AG04450 (cell line): ENCODE measurements at regions of chr14 and their contacts with region 1.

Region 1: DNA sequence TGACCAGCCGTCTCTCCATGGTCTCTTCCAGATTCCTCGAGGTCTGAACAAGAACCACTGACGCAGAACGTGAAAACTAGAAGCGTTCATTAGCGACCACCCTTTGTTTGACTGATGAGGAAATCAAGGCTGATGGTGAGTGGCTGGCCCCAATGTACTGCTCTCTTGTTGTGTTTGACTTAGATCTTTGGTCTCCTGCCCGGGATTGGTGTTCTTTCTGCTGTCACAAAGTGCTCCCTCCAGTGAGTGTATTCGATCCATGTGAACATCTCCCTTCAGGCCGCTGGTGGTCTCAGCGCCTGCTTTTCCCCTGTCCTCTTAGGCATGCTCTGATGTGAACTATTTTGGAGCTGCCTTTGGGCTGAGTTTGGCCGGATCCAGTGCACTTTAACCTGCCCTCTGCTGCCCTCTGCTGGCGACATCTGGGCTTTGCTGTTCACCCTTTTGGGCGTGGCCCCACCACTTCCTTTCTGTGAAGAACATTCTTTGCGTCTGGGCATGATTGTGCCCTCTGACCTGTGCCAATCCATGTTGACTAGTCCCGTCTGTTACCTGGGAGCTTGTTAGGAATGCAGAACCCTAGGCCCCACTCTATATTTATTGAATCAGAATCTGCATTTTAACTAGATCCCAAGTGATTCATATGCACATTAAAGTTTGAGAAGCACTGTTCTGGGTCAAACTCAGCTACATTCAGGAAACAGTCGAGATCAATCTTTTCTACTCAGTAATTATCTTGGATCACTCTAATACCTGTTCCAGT is 279.2 kb downstream of the TTC6 start:
- DNase-seq: peak; percentile 20
- H3K4me3 ChIP-seq: no peak overlapping the region
- H3K27ac ChIP-seq: no peak overlapping the region
- H3K27me3 ChIP-seq: no peaks in the 10 kb centered on the region
- CTCF ChIP-seq: peak; percentile 93

Region 2: GRCh38 chr14:37246427-37246914 is 628.1 kb before region 1 on chr14:
- CTCF ChIA-PET with region 1: interaction called, 43 read pairs
- POLR2A ChIA-PET with region 1: no interaction called
- DNase-seq: peak; percentile 27
- H3K4me3 ChIP-seq: no peak overlapping the region
- H3K27ac ChIP-seq: no peak overlapping the region
- H3K27me3 ChIP-seq: no peaks in the 10 kb centered on the region
- CTCF ChIP-seq: peak; percentile 72

Region 3: DNA sequence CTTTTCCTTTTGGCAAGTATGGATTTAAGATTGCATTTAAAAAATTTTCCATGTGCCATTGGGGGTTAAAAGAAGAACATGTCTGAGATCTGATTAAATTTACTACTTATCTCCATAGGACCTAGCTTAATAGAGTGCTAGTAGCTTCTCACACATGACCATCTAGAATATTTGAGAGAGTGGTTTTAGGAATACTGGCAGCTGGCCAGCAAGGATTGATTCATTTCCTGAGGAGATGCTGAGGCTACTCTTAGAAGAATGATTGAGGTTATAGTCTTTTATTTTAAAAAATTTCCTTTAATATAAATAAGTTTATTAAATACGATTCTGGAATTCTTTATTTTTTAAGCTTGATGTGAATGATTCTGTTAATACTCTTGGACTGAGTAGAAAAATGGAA is 620.7 kb before region 1 on chr14:
- CTCF ChIA-PET with region 1: interaction called, 16 read pairs
- POLR2A ChIA-PET with region 1: no interaction called
- DNase-seq: peak; percentile 16
- H3K4me3 ChIP-seq: no peak overlapping the region
- H3K27ac ChIP-seq: no peak overlapping the region
- H3K27me3 ChIP-seq: no peaks in the 10 kb centered on the region
- CTCF ChIP-seq: no peak

Region 4: GRCh38 chr14:37709419-37710195 is 165.0 kb before region 1 on chr14:
- CTCF ChIA-PET with region 1: interaction called, 112 read pairs
- POLR2A ChIA-PET with region 1: no interaction called
- DNase-seq: no peak
- H3K4me3 ChIP-seq: no peak overlapping the region
- H3K27ac ChIP-seq: no peak overlapping the region
- H3K27me3 ChIP-seq: no peaks in the 10 kb centered on the region
- CTCF ChIP-seq: peak; percentile 59

Region 5: DNA sequence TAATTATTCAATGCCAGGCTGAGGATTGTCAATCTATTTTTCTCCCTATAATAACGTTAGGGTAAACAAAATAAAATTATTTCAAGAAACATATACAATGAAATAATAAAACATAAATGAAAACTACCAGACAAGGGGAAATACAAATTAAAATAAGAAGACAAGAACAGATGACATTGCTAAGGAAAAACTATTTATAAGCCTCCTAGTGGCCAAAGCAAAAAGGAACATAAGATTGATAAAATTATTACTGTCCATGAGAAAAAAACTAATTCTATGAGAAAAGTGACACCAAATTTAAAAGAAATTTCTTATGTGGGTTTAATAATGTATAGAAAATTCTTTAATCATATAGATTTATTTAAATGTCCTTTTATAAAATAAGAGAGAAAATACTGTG is 15.5 kb after region 1 on chr14:
- CTCF ChIA-PET with region 1: interaction called, 20 read pairs
- POLR2A ChIA-PET with region 1: no interaction called
- DNase-seq: no peak
- H3K4me3 ChIP-seq: no peak overlapping the region
- H3K27ac ChIP-seq: no peak overlapping the region
- H3K27me3 ChIP-seq: no peaks in the 10 kb centered on the region
- CTCF ChIP-seq: peak; percentile 37

Region 6: GRCh38 chr14:38238332-38238731 is 363.7 kb after region 1 on chr14:
- CTCF ChIA-PET with region 1: no interaction called
- POLR2A ChIA-PET with region 1: no interaction called
- DNase-seq: peak; percentile 7
- H3K4me3 ChIP-seq: no peak overlapping the region
- H3K27ac ChIP-seq: no peak overlapping the region
- H3K27me3 ChIP-seq: no peaks in the 10 kb centered on the region
- CTCF ChIP-seq: no peak